Activated CD4-positive, alpha-beta T cell treated with anti-CD3 and anti-CD28 coated beads for 36 hours (primary cell): ENCODE measurements at regions of chr11 and their contacts with region 1.

Region 1: GRCh38 chr11:35082321-35083182 is 56.4 kb upstream of the CD44 start:
- DNase-seq: peak; percentile 89
- ATAC-seq: peak; percentile 78
- H3K4me3 Mint-ChIP-seq: peak overlapping the region; percentile 30
- H3K27ac Mint-ChIP-seq: peak overlapping the region; percentile 85
- H3K4me1 Mint-ChIP-seq: peaks cover 93% of the 10 kb centered on the region
- H3K27me3 Mint-ChIP-seq: no peaks in the 10 kb centered on the region

Region 2: DNA sequence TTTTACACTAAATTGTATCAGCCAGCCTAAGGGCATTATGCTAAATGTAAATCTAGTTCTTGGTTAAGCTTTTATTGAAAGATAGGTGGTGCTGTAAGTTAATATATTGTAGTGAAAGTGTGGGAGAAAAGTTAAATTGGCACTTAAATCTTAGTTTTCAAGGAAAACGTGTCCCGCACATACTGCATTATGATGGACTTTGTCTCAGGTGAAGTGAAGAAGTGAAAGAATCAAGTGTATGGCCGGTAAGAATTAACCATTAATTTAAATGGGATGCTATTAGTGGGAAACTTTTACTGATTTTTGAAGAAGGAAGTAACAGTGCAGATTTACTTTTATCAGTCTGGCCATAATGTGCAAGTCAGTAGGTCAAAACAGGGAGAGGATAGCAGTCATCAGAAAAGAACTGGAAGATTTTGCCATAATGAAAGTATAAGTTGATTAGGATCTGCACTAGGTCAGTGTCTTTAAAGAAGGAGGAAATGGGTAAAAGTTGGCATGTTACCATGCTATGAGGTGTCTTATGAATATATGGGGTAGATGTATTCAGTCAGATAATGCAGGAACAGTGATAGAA is 84.5 kb before region 1 on chr11:
- CTCF ChIA-PET with region 1: interaction called, 3 read pairs
- POLR2A ChIA-PET with region 1: no interaction called
- intact Hi-C with region 1: loop called in 1 of 2 experiments (anchors 2 kb)
- DNase-seq: no peak
- ATAC-seq: peak; percentile 39
- H3K4me3 Mint-ChIP-seq: no peak overlapping the region
- H3K27ac Mint-ChIP-seq: peak overlapping the region; percentile 11
- H3K4me1 Mint-ChIP-seq: peaks cover 30% of the 10 kb centered on the region
- H3K27me3 Mint-ChIP-seq: no peaks in the 10 kb centered on the region

Region 3: GRCh38 chr11:35040221-35040942 is 42.2 kb before region 1 on chr11:
- CTCF ChIA-PET with region 1: interaction called, 5 read pairs
- POLR2A ChIA-PET with region 1: interaction called, 4 read pairs
- intact Hi-C with region 1: loop called (anchors 1 kb)
- DNase-seq: peak; percentile 78
- ATAC-seq: peak; percentile 86
- H3K4me3 Mint-ChIP-seq: peak overlapping the region; percentile 79
- H3K27ac Mint-ChIP-seq: peak overlapping the region; percentile 98
- H3K4me1 Mint-ChIP-seq: peaks cover 80% of the 10 kb centered on the region
- H3K27me3 Mint-ChIP-seq: peaks cover 2% of the 10 kb centered on the region

Region 4: DNA sequence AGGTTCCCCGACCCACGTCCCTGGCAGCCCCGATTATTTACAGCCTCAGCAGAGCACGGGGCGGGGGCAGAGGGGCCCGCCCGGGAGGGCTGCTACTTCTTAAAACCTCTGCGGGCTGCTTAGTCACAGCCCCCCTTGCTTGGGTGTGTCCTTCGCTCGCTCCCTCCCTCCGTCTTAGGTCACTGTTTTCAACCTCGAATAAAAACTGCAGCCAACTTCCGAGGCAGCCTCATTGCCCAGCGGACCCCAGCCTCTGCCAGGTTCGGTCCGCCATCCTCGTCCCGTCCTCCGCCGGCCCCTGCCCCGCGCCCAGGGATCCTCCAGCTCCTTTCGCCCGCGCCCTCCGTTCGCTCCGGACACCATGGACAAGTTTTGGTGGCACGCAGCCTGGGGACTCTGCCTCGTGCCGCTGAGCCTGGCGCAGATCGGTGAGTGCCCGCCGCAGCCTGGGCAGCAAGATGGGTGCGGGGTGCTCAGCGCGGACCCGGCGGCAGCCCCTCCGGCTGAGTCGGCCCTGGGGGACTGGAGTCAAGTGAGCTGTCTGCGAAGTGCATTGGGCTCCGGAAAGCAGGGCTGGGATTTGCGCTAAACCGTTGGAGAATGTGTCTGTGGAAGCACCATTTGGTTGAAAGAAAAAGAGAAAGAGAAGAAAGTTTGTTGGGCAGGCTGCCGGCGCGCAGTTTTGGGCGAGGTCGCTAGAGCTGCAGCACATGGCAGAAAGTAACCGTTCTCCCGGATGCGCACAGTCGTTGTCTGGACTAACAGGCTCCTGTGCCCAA is 56.6 kb after region 1 on chr11 and contains the start of gene CD44:
- CTCF ChIA-PET with region 1: interaction called, 10 read pairs
- POLR2A ChIA-PET with region 1: interaction called, 5 read pairs
- intact Hi-C with region 1: no loop called
- DNase-seq: peak; percentile 83
- ATAC-seq: peak; percentile 67
- H3K4me3 Mint-ChIP-seq: peak within 1 kb of the TSS; percentile 83
- H3K27ac Mint-ChIP-seq: peak within 1 kb of the TSS; percentile 93
- H3K4me1 Mint-ChIP-seq: peaks cover 52% of the 10 kb centered on the region
- H3K27me3 Mint-ChIP-seq: no peaks in the 10 kb centered on the region
- total RNA-seq, gene CD44: 357 to 435 TPM

Region 5: GRCh38 chr11:35237860-35238715 is 155.5 kb after region 1 on chr11:
- CTCF ChIA-PET with region 1: interaction called, 3 read pairs
- POLR2A ChIA-PET with region 1: no interaction called
- intact Hi-C with region 1: loop called in 1 of 2 experiments (anchors 5 kb)
- DNase-seq: peak; percentile 78
- ATAC-seq: no peak
- H3K4me3 Mint-ChIP-seq: no peak overlapping the region
- H3K27ac Mint-ChIP-seq: peak overlapping the region; percentile 74
- H3K4me1 Mint-ChIP-seq: peaks cover 68% of the 10 kb centered on the region
- H3K27me3 Mint-ChIP-seq: no peaks in the 10 kb centered on the region